ENCODE measurements at regions of chr20 and their contacts with region 1.

Region 1: DNA sequence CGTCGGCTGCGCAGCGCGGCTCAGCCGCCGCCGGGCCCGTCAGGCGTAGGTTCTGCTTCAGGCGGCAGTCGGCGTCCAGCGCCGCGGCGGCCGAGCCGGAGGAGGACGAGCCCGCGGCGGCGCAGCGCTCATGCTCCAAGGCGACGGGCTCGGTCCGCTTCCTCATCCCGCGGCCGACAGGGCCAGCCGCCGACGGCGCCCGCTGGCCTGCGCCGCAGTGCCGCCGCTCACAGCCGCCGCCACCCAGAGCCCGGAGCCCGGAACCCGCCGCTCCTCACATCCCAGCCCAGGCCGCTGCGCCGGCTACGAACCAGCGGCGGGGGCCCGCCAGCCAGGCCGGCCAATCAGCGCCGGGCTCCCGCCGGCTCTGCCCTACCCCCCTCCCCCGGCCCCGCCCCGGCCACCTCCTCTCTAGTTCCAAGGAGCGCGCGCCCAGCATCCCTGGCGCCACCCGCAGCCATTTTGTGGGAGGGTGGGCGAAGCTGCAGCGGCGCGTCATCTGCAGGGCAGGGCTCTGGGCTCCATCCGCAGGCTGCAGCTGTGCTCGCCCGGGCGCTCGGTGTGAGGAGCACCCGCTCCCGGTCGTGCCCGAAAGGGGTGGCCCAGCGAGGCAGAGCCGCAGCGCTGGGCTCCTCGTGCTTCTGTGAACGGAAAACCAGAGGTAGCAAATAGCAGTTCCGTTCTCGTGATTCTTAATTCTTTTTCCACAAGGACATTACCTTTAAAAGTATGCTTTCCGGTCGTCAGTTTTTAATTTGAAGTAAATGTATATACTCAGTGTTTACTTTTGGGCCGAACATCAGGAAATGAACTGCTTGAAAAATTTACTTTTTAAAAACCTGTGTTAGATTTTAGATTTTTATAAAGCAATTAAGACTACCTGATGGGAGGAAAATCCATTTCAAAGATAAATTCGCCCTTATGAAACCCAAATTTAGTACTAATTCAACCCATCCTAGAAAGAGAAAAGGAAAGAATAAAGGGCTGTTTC is at the start of gene ABHD12:
- DNase-seq: peak; percentile 93 to 96 (median 94)
- H3K4me3 ChIP-seq: peak within 1 kb of the TSS; percentile 81
- H3K27ac ChIP-seq: peak within 1 kb of the TSS; percentile 59 to 90
- H3K4me1 ChIP-seq: peaks cover 3% of the 10 kb centered on the region
- H3K27me3 ChIP-seq: no peaks in the 10 kb centered on the region
- CTCF ChIP-seq: peak in 1 of 3 donors; percentile 11
- EP300 ChIP-seq: no peak
- POLR2A ChIP-seq: peak; percentile 25
- total RNA-seq, gene ABHD12: 15.0 to 46.9 (median 37.6) TPM

Region 2: DNA sequence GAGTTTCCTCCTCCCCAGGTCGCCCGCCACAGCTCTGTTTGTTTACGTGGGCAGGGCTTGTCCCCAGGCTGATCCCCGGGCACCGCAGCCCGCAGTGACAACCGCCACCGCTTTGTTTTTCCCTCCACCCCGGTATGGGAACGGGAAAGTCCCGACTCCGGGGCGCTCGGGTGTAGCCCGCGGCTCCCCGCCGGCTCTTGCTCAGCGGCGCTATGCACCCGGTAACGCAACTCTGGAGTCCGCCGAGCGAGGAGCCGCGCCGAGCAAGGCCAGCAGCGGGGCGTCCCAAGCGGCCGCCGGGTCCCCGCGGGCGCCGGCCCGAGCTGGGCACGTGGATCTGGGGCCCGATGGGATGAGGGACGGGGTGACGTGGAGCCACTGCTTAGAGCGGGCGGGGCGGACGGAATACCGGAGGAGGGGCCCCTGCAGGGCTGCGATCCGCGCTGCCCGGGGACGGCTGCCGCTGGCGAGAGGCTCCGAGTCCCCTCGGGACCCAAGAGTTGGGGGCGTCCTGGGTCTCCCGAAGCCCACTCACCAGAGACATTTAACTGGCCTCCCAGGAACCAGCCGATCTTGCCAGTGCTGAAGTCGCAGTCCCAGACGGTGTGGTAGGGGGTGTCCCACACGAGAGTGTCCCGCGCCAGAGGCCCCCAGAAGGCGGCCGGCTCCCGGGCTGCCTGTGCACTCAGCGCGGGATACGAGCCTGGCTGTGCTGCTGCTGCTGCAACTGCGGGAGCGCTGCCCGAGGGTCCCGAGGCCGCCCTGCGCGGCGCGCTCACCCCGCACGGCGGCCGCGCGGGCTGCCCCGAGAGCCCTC is 333.4 kb before region 1 on chr20:
- intact Hi-C with region 1: loop called in 1 of 4 experiments (anchors 10 kb)
- DNase-seq: peak; percentile 58 to 69 (median 67)
- H3K4me3 ChIP-seq: peak overlapping the region; percentile 80
- H3K27ac ChIP-seq: peak overlapping the region; percentile 74 to 86
- H3K4me1 ChIP-seq: peaks cover 37% of the 10 kb centered on the region
- H3K27me3 ChIP-seq: no peaks in the 10 kb centered on the region
- CTCF ChIP-seq: no peak
- EP300 ChIP-seq: no peak
- POLR2A ChIP-seq: peak; percentile 34

Region 3: DNA sequence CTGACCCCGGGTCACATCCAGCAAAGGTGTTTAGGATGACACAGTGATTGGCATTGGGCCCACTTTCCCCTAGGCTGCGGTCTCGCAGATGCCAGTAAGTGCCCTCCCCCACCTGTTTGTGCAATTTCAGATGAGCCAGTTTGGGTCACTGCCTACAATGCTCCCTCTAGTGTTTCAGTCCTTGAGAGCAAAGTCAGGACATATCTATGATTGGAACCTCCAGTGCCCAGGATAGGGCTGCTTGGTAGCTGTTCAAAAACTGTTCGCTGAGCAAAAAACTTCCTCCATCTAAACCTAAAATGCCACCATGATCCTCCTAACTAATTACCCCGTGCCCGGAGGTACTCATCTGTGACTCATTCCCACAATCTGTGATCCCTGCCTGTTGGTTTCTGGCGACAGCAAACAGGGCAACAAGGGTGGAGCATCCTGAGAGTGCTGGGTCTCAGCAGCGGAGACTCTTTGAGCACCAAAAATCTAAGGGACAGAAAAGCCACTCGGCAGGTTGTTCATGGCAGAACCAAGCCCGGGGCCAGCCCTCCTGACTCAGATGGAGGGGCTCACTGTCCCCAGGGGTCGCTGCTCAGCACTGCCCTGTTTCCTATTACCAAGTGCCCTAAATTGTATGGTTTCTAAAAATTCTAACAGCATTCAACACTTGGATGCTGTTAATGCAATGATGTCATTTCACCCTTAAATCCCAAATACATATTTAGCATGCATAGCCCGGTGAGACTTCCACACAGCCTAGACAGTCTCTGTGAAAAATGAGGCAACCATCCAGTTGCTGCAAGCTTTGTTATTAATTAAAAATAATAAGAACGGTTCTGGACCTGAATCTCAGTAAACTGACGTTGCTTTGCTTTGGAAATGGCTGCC is 313.9 kb before region 1 on chr20:
- intact Hi-C with region 1: loop called in 1 of 4 experiments (anchors 10 kb)
- DNase-seq: no peak
- H3K4me3 ChIP-seq: peak overlapping the region; percentile 22
- H3K27ac ChIP-seq: no peak overlapping the region
- H3K4me1 ChIP-seq: peaks cover 1% of the 10 kb centered on the region
- H3K27me3 ChIP-seq: no peaks in the 10 kb centered on the region
- CTCF ChIP-seq: no peak
- EP300 ChIP-seq: no peak
- POLR2A ChIP-seq: no peak

Region 4: DNA sequence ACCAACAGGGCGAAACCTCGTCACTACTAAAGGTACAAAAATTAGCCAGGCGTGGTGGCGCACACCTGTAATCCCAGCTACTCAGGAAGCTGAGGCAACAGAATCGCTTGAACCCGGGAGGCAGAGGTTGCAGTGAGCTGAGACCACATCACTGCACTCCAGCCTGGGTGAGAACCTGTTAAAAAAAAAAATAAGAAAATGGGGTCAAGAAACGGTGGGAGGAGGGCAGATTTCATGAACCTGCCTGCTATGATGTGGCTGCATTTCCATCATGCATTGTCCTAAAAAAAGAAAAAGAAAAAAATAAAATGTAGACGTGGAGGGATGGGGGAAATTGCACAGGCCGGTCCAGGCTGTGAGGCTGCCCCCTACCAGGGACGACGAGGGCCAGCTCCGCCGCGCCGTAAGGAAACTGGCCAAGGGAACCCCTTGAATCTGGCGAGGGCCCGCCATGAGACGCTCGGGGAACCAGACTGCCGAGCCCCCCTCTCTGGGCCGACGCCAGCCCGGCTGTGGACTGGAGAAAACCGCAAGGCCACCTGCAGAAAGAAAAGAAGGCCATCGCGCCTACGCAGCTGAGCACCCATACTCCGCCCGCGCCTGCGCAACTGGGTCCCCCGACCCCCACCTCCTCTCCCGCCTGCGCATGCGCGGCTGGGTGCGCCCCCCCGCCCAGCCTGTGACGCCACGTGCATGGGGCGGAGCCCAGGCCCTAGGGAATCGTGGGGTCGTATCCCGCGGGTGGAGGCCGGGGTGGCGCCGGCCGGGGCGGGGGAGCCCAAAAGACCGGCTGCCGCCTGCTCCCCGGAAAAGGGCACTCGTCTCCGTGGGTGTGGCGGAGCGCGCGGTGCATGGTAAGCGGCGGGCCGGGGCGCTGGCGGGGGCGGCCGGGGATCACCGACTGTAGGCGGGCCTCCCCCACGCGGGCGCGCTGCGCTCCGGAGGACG is 195.5 kb before region 1 on chr20 and contains the start of gene ENTPD6:
- intact Hi-C with region 1: loop called in 3 of 4 experiments (anchors 10 kb)
- DNase-seq: peak; percentile 92 to 98 (median 96)
- H3K4me3 ChIP-seq: peak within 1 kb of the TSS; percentile 77
- H3K27ac ChIP-seq: peak within 1 kb of the TSS; percentile 58 to 75
- H3K4me1 ChIP-seq: peaks cover 22% of the 10 kb centered on the region
- H3K27me3 ChIP-seq: no peaks in the 10 kb centered on the region
- CTCF ChIP-seq: no peak
- EP300 ChIP-seq: no peak
- POLR2A ChIP-seq: peak; percentile 82
- total RNA-seq, gene ENTPD6: 34.9 to 73.8 (median 66.5) TPM

Region 5: DNA sequence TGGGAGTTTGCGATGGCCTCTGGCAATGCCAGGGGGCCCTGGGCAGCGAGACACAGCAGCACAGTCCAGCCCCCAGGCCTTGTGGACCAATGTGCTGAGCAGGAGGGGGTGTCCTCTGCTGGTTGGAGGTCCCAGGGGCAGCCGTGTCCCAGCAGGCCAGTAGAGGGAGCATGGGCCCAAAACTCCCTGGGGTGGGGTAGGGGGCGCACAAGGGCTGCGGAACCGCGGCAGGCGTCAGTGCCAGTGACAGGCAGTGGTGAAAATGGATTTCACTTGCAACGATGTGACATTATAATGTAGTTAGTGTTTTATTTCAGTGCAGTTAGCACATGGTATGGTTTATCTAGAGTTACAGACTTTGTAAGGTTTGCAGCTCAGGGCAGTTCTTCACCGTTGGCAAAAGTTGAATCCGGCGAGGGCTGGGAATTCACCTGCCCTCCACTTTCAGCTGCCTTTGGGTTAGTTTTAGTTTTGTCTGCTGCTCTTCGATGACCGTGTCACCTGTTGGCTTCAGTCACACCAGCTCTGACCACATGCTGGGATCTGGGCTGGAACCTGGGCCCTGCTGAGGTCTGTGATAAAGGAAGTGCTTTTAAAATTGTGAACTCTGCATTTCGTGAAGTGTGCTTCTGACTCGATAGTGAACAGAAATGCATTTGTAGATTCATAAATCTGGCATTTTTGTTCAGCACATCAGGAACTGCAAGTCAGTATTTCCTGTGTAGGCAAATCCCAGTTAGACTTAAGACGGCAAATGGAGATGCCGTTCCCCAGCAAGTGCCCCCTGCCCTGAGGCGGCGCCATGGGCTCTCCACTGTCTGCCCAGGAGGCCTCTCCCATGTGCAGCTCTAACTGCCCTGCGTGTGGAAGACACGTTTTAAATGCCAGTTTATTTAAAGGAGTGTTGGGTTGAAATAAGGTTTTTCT is 96.1 kb before region 1 on chr20:
- intact Hi-C with region 1: loop called (anchors 5 to 10 kb)
- DNase-seq: peak; percentile 50 to 70 (median 62)
- H3K4me3 ChIP-seq: no peak overlapping the region
- H3K27ac ChIP-seq: no peak overlapping the region
- H3K4me1 ChIP-seq: no peaks in the 10 kb centered on the region
- H3K27me3 ChIP-seq: no peaks in the 10 kb centered on the region
- CTCF ChIP-seq: peak; percentile 28 to 72 (median 63)
- EP300 ChIP-seq: no peak
- POLR2A ChIP-seq: no peak

Region 6: DNA sequence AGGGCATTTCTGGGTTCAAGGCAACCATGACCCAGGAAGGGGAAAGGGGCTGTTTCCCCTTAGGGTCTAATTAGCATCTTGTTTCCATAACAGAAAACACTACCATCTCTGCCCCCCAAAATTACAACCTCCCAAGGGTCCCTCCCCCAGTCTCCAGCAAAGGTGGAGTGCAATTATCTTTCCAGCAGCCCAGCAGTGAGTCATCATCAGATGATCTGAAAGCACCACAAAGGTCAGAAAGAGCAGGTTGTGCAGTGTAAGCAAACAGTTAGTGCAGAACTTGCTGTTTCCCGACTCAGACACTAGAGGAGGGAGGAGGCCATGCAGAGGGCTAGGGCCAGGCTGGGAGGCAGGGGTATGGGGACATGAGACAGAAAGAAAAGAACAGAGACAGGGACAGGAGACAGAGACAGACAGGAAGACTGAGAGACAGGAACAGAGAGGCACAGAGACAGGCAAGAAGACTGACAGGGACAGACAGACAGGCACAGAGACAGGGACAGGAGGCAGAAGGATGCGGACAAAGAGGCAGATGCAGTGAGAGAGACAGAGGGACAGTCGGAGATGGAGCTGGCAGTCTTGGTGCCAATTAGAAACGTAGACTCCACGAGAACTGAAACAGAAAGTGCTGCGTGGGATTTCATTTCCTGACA is 80.4 kb before region 1 on chr20:
- intact Hi-C with region 1: loop called in 1 of 4 experiments (anchors 5 kb)
- DNase-seq: peak in 4 of 5 donors; percentile 39 to 61 (median 52)
- H3K4me3 ChIP-seq: peak overlapping the region; percentile 15
- H3K27ac ChIP-seq: peak overlapping the region; percentile 45 to 56
- H3K4me1 ChIP-seq: peaks cover 18% of the 10 kb centered on the region
- H3K27me3 ChIP-seq: no peaks in the 10 kb centered on the region
- CTCF ChIP-seq: peak in 2 of 3 donors; percentile 33 to 51
- EP300 ChIP-seq: no peak
- POLR2A ChIP-seq: no peak

Region 7: DNA sequence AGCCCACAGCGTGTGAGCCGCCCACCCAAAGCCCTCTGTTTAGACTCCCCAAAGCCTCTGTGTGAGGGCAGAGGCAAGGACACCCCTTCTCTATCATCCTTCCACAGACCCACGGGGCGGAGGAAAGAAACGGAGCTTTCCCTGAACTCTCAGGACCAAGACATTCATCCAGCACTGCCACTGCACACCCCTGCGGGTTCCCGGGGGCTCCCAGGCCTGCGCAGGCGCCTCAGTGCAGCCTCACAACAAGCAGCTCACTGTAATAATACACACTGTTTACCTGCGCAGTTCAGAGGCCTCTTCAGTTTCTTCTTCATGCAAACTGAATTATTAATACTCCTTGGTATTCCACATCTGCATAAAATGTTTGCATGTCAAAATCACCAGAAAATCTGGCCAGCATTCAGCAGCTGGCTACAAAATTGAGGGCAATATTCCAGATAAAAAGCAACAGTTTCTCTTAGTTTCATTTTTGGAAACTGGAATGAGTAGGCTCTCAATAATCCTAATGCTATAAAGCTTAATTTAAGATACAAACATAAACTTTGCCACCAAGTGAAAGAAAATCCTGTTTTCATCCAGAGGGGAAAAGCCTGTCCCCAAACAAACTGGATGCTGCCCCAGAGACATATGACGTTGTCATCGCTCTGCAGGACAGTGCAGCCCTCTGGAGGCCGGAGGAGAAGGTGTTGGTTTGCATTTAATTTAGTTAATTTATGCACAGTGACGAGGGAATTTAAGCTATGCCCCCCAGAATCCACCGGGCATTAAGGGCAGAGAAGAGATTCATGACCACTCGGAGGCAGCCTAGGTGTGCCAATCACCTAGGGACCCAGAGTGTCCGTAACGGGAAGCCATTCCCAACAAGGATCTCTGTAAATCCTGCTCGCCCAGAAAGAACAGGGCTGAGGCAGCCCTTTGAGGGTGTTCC is 149.2 kb after region 1 on chr20:
- intact Hi-C with region 1: no loop called
- DNase-seq: no peak
- H3K4me3 ChIP-seq: peak overlapping the region; percentile 24
- H3K27ac ChIP-seq: peak overlapping the region in 1 of 2 donors; percentile 8
- H3K4me1 ChIP-seq: peaks cover 17% of the 10 kb centered on the region
- H3K27me3 ChIP-seq: no peaks in the 10 kb centered on the region
- CTCF ChIP-seq: peak; percentile 14 to 40 (median 21)
- EP300 ChIP-seq: no peak
- POLR2A ChIP-seq: no peak